PC-9 (cell line): ENCODE measurements at regions of chr7 and their contacts with region 1.

Region 1: DNA sequence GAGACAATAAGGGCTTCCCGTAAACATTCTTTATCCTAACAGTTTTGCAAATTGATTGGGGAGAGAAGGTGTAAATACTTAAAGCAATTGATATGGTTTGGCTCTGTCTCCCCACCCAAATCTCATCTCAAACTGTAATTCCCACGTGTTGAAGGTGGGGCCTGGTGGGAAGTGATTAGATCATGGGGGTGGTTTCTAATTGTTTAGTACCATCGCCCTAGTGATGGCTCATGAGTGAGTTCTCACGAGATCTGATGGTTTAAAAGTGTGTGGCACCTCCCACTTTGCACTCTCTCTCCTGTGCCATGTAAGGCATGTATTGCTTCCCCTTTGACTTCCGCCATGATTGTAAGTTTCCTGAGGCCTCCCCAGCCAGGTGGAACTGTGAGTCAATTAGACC is 22.1 kb upstream of the CAPZA2 start:
- DNase-seq: no peak
- H3K4me3 ChIP-seq: no peak overlapping the region
- H3K27ac ChIP-seq: no peak overlapping the region
- H3K4me1 ChIP-seq: peaks cover 13% of the 10 kb centered on the region; the same call in 1 of the 2 replicates
- H3K27me3 ChIP-seq: no peaks in the 10 kb centered on the region
- CTCF ChIP-seq: no peak

Region 2: GRCh38 chr7:116809636-116810266 is 30.5 kb before region 1 on chr7:
- CTCF ChIA-PET with region 1: no interaction called
- POLR2A ChIA-PET with region 1: no interaction called
- intact Hi-C with region 1: no loop called
- DNase-seq: peak; percentile 31 to 71
- H3K4me3 ChIP-seq: peak overlapping the region; percentile 25; the same call in 1 of the 2 replicates
- H3K27ac ChIP-seq: peak overlapping the region; percentile 81
- H3K4me1 ChIP-seq: peaks cover 44% of the 10 kb centered on the region
- H3K27me3 ChIP-seq: no peaks in the 10 kb centered on the region
- CTCF ChIP-seq: peak; percentile 87

Region 3: DNA sequence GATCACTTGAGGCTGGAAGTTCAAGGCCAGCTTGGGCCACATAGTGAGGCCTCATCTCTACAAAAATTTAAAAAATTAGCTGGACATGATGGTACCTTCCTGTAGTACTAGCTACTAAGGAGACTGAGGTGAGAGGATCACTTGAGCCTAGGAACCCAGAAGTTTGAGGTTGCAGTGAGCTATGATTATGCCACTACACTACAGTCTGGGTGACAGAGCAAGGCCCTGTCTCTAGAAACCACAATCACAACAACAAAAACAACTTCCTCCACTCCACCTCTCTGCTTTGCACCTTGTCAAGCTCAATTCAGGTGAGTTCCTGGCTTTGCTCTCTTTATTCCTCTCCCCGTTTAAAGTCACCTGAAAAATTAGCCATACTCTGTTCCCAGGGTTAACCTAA is 13.9 kb after region 1 on chr7:
- CTCF ChIA-PET with region 1: no interaction called
- POLR2A ChIA-PET with region 1: no interaction called
- intact Hi-C with region 1: loop called (anchors 2 kb)
- DNase-seq: no peak
- H3K4me3 ChIP-seq: no peak overlapping the region
- H3K27ac ChIP-seq: no peak overlapping the region
- H3K4me1 ChIP-seq: peaks cover 5% of the 10 kb centered on the region
- H3K27me3 ChIP-seq: no peaks in the 10 kb centered on the region
- CTCF ChIP-seq: no peak